ENCODE measurements at regions of chr17 and their contacts with region 1.

Region 1: GRCh38 chr17:3894911-3895343 is 2.1 kb upstream of the CAMKK1 start:
- DNase-seq: peak; percentile 48 to 62
- H3K4me3 ChIP-seq: no peak overlapping the region
- H3K27ac ChIP-seq: peak overlapping the region; percentile 52 to 75
- H3K4me1 ChIP-seq: peaks cover 3 to 21% of the 10 kb centered on the region in 2 donors
- H3K27me3 ChIP-seq: no peaks in the 10 kb centered on the region
- CTCF ChIP-seq: no peak
- POLR2A ChIP-seq: no peak

Region 2: DNA sequence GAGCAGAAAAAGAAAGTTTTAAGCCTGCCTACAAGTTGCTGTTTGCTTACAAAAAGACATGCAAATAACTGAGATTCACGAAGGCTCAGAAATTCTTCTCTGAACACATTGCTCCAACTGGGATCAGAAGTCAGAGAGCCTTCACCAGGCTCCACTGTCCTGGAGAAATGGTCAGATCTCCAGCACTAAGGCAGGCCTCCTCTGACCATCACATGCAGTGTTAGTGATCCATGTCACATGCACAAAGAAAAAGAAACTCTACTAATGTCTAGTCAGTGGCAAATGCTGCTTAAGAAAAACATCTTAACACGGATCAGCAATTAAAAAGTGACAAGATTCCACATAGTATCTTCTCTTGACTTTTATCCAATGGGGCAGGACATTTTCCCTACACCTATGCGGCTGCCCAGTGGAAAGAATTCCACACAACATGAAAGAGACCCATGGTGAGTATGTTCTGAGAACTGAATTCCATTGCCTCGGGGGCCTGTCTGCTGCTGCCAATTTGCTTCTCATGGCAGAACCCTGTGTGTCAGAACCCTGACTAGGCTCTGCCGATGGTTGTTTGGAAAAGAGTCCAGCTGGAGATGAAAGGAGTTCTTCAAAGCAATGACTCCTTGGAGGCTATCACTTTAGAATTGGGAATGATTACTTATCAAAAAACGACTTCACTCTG is 1743.4 kb before region 1 on chr17:
- intact Hi-C with region 1: no loop called
- DNase-seq: no peak
- H3K4me3 ChIP-seq: no peak overlapping the region
- H3K27ac ChIP-seq: no peak overlapping the region
- H3K4me1 ChIP-seq: no peaks in the 10 kb centered on the region
- H3K27me3 ChIP-seq: no peaks in the 10 kb centered on the region
- CTCF ChIP-seq: no peak
- POLR2A ChIP-seq: no peak

Region 3: DNA sequence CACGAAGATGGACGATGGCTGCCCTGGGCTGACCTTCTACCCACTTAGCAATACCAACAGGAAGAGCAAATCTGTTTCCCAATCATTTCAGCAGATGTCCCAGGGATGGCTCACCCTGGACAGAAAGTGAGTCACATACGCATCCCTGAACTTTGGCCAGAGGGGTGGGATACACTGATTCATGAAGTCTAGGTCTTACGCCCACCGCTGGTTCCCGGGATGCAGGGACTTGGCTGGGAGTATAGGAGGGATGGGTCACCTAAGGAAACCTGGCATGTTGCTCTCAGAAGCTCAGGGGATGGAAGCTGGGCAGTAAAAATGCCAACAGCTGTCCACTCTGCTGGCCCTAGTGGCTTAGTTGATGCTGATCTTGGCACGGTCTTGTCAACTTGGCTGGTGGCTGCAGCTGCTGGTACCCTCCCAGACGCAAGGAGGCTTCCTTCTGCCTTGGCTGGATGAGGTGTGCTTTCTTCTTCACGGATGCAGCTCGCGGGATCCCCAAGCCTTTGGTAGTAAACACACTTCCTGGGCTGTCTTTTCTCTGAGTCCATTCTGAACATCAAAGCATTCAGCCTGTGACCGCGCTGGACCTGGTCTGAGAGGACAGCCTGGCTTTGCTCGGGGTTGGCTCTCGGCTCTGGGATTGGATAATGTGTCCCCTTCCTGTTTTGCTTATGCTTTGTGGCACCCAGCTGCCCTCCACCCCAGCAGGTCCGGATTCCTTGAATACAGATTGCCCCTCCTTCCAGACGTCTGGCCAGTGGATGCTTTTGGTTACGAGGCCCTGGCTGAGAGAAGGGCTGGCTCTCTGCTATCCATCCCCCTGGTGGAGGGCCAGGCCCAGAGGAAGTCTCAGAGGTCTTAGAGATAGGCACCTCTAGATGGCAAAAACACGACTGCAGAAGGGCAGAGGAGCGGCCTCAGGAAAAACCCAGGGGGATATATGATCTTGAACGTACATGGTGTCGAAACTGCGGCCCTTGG is 1027.2 kb before region 1 on chr17:
- intact Hi-C with region 1: loop called (anchors 5 kb)
- DNase-seq: no peak
- H3K4me3 ChIP-seq: no peak overlapping the region
- H3K27ac ChIP-seq: no peak overlapping the region
- H3K4me1 ChIP-seq: no peaks in the 10 kb centered on the region
- H3K27me3 ChIP-seq: no peaks in the 10 kb centered on the region
- CTCF ChIP-seq: no peak
- POLR2A ChIP-seq: no peak

Region 4: DNA sequence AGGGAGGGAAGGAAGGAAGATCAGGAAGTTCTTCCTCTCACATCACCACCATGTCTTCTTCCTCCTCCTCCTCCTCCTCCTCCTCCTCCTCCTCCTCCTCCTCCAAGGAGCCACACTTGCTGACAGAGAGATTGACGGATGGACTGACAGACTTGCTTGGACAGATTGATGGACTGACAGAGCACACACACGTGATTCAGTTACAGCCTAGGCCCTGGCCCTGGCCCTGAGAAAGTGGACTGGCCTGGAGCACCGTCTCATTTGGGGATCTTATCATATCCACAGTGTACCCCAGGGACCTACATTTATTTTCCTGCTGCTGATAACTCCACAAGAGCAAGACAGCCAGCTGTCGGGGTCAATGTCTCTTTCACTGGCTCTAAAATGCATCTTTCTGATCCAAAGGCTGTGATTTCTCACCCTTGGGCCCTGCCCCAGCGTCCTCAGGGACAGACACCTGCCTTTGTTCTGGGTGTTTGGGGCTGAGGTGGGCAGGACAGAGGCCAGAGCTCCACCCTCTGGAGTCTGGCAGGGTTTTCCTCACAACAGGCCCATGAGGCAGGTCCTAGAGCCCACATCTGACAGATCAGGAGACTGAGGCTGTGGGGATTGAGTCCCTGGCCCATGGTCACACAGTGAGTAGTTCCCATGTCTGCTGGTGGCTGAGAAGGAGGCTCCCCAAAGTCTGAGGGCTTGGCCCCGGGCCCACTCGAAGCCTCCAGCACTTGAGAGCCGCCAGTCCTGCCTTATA is 23.6 kb after region 1 on chr17:
- intact Hi-C with region 1: loop called (anchors 1 kb)
- DNase-seq: no peak
- H3K4me3 ChIP-seq: no peak overlapping the region
- H3K27ac ChIP-seq: no peak overlapping the region
- H3K4me1 ChIP-seq: no peaks in the 10 kb centered on the region
- H3K27me3 ChIP-seq: no peaks in the 10 kb centered on the region
- CTCF ChIP-seq: no peak
- POLR2A ChIP-seq: no peak